A673 (cell line): ENCODE measurements at regions of chr17 and their contacts with region 1.

Region 1: DNA sequence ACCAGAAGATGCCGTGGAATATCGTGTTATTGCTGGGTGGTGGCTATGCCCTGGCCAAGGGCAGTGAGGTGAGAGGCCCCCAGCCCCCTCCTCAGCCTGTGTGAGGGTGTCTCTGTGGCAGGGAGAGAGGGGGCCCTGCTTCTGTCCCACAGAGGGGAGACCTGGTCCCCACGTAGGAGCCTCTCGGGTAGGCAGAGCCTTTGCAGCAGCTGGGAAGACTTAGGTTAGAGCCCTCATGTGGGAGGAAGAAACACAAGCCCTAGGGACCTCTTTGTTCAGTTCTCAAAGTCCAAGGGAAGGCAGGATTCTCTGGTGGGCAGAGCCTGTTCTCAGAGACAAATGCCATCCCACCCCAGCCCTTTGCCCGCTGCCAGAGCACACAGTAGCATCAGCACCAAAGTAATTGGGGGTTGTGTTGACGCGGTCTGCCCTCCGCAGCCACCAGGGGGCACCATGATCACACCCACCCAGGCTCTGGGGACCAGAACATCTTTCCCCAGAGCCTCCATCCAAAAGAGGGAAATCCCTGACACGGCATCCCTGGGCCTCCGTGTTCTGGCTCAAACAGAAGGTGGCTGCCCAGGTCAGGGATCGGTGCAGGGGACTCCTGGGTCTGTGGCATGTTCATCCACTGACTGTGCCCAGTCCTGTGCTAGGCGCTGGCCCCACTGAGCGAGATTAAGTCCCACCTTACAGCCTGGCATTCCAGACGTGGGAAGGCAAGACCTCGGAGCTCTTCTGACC is 11.5 kb upstream of the FOXN1 start:
- DNase-seq: peak; percentile 75
- H3K4me3 ChIP-seq: no peak overlapping the region
- H3K27ac ChIP-seq: no peak overlapping the region
- H3K4me1 ChIP-seq: no peaks in the 10 kb centered on the region
- H3K27me3 ChIP-seq: no peaks in the 10 kb centered on the region
- CTCF ChIP-seq: peak; percentile 94

Region 2: GRCh38 chr17:28540231-28540630 is 45.6 kb after region 1 on chr17:
- CTCF ChIA-PET with region 1: interaction called, 3 read pairs
- POLR2A ChIA-PET with region 1: no interaction called
- intact Hi-C with region 1: loop called (anchors 1 kb)
- DNase-seq: no peak
- H3K4me3 ChIP-seq: no peak overlapping the region
- H3K27ac ChIP-seq: no peak overlapping the region
- H3K4me1 ChIP-seq: no peaks in the 10 kb centered on the region
- H3K27me3 ChIP-seq: no peaks in the 10 kb centered on the region
- CTCF ChIP-seq: no peak

Region 3: DNA sequence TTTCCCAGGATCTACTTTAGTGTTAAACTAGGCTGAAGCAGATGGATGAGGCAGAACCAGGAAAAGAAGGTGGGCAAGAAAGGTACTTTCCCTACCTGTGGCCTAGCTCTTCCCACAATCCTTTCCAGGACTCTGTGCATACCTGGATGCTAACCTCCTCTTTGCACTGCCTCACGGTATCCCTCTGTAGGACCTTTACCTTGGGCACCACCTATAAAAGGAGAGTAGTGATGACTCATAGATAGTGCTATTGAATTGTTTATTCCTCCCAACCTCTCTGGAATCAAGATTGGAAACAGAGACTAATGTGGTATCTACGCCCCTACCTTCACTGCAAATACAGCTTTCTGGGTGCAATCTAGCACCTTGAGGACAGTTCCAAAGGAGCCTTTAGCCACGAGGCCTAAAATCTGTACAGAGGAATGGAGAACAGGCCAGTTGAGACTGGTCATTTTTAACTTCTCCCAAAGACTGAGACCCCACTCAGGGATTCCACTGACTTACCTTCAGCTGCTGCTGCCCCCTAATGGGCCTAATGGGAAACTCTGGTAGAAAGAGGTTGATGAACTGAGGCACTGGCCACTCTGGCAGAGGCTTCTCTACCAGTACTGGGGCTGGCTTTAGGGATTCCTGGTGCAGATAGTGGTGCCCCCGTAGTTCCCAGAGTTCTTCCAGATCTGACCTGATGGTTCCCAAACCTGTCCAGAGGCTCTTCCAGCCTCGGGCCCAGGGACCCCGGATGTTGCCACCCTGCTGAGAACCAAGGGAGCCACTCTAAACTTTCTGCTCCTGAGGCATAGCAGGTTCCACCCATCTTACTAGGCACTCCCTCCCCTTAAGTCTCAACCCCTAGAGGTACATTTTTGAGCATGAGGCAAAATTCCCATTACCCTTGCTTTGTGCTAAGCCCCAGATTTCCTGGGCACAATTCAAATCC is 118.6 kb after region 1 on chr17:
- CTCF ChIA-PET with region 1: no interaction called
- POLR2A ChIA-PET with region 1: no interaction called
- intact Hi-C with region 1: loop called (anchors 1 kb)
- DNase-seq: peak; percentile 62
- H3K4me3 ChIP-seq: no peak overlapping the region
- H3K27ac ChIP-seq: no peak overlapping the region
- H3K4me1 ChIP-seq: no peaks in the 10 kb centered on the region
- H3K27me3 ChIP-seq: no peaks in the 10 kb centered on the region
- CTCF ChIP-seq: peak; percentile 81

Region 4: GRCh38 chr17:28902819-28903545 is 408.4 kb after region 1 on chr17 and contains the start of gene DHRS13:
- CTCF ChIA-PET with region 1: no interaction called
- POLR2A ChIA-PET with region 1: no interaction called
- intact Hi-C with region 1: no loop called
- DNase-seq: peak; percentile 96
- H3K4me3 ChIP-seq: peak within 1 kb of the TSS; percentile 90
- H3K27ac ChIP-seq: peak within 1 kb of the TSS; percentile 90
- H3K4me1 ChIP-seq: peaks cover 37% of the 10 kb centered on the region
- H3K27me3 ChIP-seq: no peaks in the 10 kb centered on the region
- CTCF ChIP-seq: peak; percentile 93
- total RNA-seq, gene DHRS13: 37.3 and 41.9 TPM in 2 replicates